ENCODE measurements at regions of chr16 and their contacts with region 1.

Region 1: GRCh38 chr16:78274771-78275170 is 175.3 kb downstream of the WWOX start:
- DNase-seq: no peak
- ATAC-seq: no peak
- H3K4me3 ChIP-seq: no peak overlapping the region
- H3K27ac ChIP-seq: no peak overlapping the region
- H3K4me1 ChIP-seq: no peaks in the 10 kb centered on the region
- H3K27me3 ChIP-seq: no peaks in the 10 kb centered on the region

Region 2: GRCh38 chr16:77868052-77868451 is 406.7 kb before region 1 on chr16:
- intact Hi-C with region 1: no loop called
- DNase-seq: no peak
- ATAC-seq: no peak
- H3K4me3 ChIP-seq: no peak overlapping the region
- H3K27ac ChIP-seq: no peak overlapping the region
- H3K4me1 ChIP-seq: peaks cover 4 to 6% of the 10 kb centered on the region in 2 donors
- H3K27me3 ChIP-seq: no peaks in the 10 kb centered on the region

Region 3: DNA sequence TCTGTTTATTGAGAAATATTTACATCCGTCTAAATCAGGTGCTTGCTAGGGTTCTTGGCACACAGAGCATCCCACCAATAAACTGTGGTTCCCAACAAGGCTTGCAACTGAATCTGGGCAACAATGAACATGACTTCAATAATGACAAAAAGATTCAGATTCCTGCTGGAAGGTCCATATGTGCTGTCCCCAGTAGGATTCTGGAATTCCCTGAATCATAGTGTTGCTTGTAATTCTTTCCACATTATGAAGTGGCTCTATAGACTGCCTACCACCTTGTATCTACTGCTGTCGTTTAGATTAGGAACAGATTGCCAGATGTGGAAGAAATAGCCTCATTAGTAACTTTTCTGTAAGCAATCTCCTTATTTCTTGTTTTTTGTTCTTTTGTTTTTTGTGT is 90.6 kb after region 1 on chr16:
- intact Hi-C with region 1: loop called in 1 of 2 experiments (anchors 5 kb)
- DNase-seq: no peak
- ATAC-seq: no peak
- H3K4me3 ChIP-seq: no peak overlapping the region
- H3K27ac ChIP-seq: no peak overlapping the region
- H3K4me1 ChIP-seq: no peaks in the 10 kb centered on the region
- H3K27me3 ChIP-seq: no peaks in the 10 kb centered on the region

Region 4: DNA sequence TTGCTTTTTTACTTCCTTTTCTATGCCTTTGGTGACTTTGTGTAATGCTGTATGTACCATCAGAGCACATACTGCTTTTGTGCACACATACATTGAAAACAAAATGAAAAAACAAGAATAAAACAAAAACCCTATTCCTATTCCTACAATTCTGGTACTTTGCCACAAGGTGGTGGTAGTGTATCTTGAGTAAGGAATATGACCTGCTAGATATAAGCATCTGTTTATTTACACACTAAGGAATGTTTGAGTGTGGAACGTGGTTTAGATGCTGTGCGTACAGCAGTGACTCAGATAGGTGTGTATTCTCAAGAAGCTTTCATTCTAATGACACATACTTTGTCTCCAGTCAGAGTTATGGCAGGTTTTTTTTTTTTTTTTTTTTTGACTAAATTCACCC is 430.9 kb after region 1 on chr16:
- intact Hi-C with region 1: no loop called
- DNase-seq: no peak
- ATAC-seq: no peak
- H3K4me3 ChIP-seq: no peak overlapping the region
- H3K27ac ChIP-seq: no peak overlapping the region
- H3K4me1 ChIP-seq: no peaks in the 10 kb centered on the region
- H3K27me3 ChIP-seq: no peaks in the 10 kb centered on the region